ENCODE measurements at regions of chr5 and their contacts with region 1.

Region 1: GRCh38 chr5:149636851-149637246 is 55.6 kb downstream of the ARHGEF37 start:
- DNase-seq: no peak

Region 2: DNA sequence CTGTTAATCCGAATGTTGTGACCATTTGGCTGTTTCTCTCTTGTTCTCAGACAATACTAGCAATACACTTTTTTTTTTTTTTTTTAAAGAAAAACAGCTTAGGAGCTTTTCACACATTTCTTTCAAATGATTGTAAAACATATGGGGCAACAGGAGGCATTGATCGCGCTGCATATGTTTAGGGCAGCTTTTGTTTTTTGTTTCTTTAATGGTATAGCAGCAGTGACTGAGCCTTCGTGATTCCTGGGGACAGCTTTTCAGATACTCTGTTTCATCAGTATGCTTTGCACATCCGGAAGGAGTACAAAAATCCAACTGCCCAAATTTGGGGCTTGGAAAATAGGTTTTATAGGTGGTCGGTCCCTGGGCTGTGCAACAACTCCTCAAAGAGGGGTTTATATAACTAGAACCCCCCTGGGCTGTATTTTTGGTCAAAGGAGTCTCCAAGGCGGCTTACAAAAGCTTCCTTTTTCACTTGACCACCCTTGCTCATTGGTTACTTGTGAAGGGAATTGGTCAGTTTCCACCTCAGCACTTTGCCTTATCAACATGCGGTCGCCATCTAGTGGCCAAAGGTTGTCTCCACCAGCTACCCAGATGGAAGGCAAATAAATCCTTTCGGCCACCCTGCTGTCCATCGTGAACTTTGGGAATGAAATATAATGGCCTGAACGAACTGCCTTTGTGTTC is 215.9 kb after region 1 on chr5:
- intact Hi-C with region 1: loop called (anchors 5 kb)
- DNase-seq: no peak

Region 3: DNA sequence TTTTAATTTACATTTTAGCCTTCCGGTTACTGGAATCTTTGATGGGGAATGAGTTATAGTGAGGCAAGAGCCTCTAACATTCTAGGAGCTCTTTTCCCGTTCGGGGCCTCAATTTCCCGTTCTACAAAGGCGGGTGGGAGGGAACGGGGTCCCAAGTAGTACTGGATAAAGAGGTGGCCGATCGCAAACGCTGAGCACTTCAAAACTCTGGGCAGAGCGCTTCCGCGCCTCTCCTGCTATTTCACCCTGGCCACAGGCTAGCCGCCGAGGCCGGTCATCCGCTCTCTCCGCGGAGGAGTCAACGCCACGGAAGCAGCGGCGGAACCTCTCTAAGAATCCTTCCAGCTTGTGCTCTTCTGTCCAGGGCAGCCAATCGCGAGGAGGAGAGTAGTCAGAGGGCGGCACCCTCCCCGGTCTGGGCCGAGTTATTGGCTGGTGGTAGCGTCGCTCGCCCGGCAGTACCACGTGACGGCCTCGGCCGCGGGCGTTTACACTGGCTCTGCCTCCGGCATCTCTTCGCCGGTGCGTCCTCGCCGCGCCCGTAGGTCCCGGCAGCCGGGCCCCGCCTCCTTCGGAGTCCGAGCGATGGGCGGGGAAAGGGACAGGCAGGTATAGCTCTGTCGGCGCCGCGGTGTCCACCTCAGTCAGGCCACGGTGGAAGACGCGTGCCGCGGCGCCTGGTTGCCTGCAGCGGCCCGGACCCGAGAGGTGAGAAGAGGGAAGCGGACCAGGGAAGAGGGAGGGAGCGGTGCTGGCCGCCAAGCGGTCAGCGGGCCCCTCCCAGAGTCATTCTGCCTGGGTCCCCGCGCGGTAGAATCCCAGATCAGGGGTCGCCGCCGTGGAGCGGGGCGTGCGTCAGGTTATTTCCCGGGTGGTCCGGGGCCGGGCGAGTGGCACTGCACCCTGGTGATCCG is 323.7 kb after region 1 on chr5 and contains the start of gene SLC26A2:
- intact Hi-C with region 1: loop called (anchors 5 kb)
- DNase-seq: peak; percentile 99
- total RNA-seq, gene SLC26A2: 5.8 TPM

Region 4: GRCh38 chr5:149990518-149991376 is 353.9 kb after region 1 on chr5:
- intact Hi-C with region 1: loop called (anchors 2 kb)
- DNase-seq: no peak